Activated T-helper 1 cell treated with anti-CD3 and anti-CD28 coated beads, Interleukin-12 subunit alpha, Interleukin-12 subunit beta, Interleukin-2, Interleukin-4 antibody, amounts not matched to agents 30 ng/mL and 10 ng/mL and 1 ng/mL, durations not matched to agents 14 hours and 24 hours and 36 hours (primary cell): ENCODE measurements at regions of chr11 and their contacts with region 1.

Region 1: DNA sequence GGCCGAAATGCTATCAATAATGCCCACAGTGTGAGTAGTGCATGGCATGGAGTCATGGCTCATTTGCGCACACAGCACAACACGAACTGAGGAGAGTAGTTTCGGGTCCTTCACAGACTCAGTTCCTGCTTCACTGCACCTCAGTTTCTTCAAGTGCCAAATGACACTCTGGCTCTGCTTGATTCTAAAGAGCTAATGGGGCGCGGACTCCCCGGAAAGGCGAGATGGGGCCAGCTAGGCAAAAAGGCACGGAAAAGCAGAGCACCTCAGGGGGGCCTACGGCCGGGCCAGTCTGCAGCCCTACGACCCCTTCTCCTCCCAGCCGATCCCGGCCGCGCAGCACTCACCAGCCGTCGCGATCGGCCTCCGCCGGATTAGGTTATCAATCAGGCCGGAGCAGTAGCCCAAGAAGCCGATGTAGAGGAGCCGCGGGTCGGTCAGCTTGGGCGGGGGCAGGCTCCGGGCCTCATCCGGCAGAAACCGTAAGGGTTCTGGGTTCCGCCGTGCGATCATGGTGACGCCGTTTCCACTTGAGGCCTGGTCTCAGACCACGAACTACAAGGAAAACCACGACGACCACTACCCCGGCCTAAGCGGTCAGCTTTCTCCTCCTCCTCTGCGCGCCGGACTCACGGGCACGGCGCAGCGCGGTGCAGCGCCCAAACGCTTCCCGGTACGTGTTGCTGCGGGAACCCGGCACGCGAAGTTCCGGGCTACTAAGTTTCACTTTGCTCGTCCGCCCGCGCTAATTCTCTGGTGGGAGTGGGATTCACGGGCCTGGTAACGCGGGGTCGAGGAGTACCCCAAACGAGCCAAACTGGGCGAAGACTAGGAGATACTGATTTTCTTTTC is at the start of gene NDUFC2:
- DNase-seq: peak; percentile 62
- H3K4me3 Mint-ChIP-seq: peak within 1 kb of the TSS; percentile 95
- H3K27ac Mint-ChIP-seq: peak within 1 kb of the TSS; percentile 86
- H3K4me1 Mint-ChIP-seq: peaks cover 53% of the 10 kb centered on the region
- H3K27me3 Mint-ChIP-seq: no peaks in the 10 kb centered on the region
- total RNA-seq, gene NDUFC2: 208 and 220 TPM in 2 replicates

Region 2: GRCh38 chr11:78094250-78094649 is 14.8 kb after region 1 on chr11:
- intact Hi-C with region 1: loop called (anchors 1 kb)
- DNase-seq: peak; percentile 20
- H3K4me3 Mint-ChIP-seq: peak overlapping the region; percentile 11
- H3K27ac Mint-ChIP-seq: peak overlapping the region; percentile 82
- H3K4me1 Mint-ChIP-seq: peaks cover 10% of the 10 kb centered on the region
- H3K27me3 Mint-ChIP-seq: no peaks in the 10 kb centered on the region